ENCODE measurements at regions of chr1 and their contacts with region 1.

Region 1: DNA sequence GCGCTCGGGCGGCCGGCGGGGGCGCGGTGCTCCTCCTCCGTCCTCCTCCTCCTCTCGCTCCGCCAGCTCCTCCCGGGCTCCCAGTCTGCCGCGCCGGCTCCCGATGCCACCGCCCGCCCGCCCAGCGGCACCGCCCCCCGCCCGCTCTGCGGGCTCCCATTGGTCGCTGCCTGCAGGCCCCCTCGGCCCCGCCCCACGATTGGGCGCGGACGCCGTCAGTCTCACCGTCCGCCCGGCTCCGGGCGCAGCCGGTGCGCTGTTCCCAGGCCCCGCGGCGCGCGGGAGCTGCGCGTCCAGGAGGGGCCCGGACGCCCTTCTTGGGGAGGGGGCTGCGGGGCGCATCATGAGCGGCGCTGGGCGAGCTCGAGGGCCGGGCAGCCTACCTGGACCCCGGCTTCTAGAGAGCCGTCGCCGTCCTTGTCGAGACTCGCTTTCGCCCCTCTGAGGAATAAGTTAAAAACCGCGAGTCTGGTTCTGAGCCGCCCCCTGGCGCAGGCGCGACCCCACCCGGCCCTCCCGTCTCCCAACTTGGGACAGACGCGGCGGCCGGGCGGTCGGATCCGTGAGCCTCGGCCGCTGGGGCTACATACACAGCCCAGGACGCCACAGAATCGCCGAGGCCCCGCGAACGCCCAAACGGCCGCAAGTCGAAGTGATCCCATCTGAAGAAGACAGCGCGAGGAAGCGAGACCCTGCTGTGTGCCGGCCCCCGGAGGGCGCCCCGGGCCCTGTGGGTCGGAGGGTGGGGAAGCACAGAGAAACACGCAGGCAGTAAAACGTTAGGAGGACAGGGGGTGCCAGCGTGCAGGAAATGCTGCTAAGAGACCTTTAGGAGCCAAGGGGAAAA is at the start of gene SIPA1L2:
- DNase-seq: peak; percentile 97
- H3K4me3 ChIP-seq: peak within 1 kb of the TSS; percentile 84 to 94 (median 92)
- H3K27ac ChIP-seq: peak within 1 kb of the TSS; percentile 92 to 98 (median 96)
- H3K4me1 ChIP-seq: peaks cover 0 to 33% (median 13%) of the 10 kb centered on the region in 4 donors
- H3K27me3 ChIP-seq: no peaks in the 10 kb centered on the region
- CTCF ChIP-seq: peak in 3 of 4 experiments; percentile 30 to 56 (median 51)
- EP300 ChIP-seq: no peak
- POLR2A ChIP-seq: peak; percentile 31 to 47
- total RNA-seq, gene SIPA1L2: 22.5 to 42.5 (median 32.1) TPM

Region 2: DNA sequence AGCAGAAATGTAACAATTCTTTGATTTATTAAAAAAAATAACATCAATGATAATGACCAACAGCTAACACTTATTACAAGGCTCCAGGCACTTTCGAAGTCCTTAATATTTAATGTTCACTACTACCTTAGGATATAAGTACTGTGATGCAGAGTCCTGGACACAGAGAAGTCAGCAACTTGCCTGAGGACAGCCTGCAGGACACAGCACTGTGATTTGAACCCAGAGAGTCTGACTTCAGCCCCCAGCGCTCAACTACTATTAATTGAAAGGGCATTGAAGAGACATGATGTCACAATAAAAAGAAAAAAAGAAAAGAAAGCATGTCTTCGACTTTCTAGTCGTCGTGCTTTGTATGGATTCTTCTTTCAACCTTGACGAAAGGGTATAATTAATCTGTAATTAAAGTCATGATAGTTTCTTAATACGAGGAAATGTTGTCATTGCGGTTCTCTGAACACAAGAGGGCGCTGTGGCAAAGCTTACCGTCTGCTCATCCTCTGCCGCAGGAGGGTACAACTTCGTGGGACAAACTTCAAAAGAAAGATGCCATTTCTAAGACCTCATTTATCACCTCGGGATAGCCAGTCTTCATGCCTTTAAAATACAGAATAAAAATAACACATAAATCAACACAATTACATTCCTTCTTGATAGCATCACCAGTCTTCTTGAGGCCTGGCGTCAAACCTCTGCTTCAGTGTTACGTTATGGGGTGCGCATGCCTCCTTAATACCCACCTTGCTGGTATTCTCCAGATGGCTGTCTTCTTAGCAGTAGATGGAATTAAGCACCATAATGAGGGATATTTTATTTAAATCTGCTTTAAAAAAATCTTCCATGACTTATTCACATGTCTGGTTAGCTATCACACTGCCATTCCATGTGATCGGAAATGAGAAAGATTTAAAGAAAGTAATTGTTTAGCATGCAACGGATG is 763.6 kb before region 1 on chr1:
- intact Hi-C with region 1: loop called (anchors 2 kb)
- DNase-seq: no peak
- H3K4me3 ChIP-seq: no peak overlapping the region
- H3K27ac ChIP-seq: peak overlapping the region in 1 of 4 donors; percentile 19
- H3K4me1 ChIP-seq: peaks cover 0 to 34% (median 10%) of the 10 kb centered on the region in 4 donors
- H3K27me3 ChIP-seq: no peaks in the 10 kb centered on the region
- CTCF ChIP-seq: peak; percentile 43 to 86 (median 75)
- EP300 ChIP-seq: no peak
- POLR2A ChIP-seq: no peak

Region 3: GRCh38 chr1:232435729-232436128 is 194.5 kb before region 1 on chr1:
- intact Hi-C with region 1: loop called (anchors 5 kb)
- DNase-seq: peak; percentile 76
- H3K4me3 ChIP-seq: no peak overlapping the region
- H3K27ac ChIP-seq: peak overlapping the region in 3 of 4 donors; percentile 1 to 63 (median 61)
- H3K4me1 ChIP-seq: peaks cover 0 to 32% (median 18%) of the 10 kb centered on the region in 4 donors
- H3K27me3 ChIP-seq: no peaks in the 10 kb centered on the region
- CTCF ChIP-seq: no peak
- EP300 ChIP-seq: no peak
- POLR2A ChIP-seq: no peak

Region 4: DNA sequence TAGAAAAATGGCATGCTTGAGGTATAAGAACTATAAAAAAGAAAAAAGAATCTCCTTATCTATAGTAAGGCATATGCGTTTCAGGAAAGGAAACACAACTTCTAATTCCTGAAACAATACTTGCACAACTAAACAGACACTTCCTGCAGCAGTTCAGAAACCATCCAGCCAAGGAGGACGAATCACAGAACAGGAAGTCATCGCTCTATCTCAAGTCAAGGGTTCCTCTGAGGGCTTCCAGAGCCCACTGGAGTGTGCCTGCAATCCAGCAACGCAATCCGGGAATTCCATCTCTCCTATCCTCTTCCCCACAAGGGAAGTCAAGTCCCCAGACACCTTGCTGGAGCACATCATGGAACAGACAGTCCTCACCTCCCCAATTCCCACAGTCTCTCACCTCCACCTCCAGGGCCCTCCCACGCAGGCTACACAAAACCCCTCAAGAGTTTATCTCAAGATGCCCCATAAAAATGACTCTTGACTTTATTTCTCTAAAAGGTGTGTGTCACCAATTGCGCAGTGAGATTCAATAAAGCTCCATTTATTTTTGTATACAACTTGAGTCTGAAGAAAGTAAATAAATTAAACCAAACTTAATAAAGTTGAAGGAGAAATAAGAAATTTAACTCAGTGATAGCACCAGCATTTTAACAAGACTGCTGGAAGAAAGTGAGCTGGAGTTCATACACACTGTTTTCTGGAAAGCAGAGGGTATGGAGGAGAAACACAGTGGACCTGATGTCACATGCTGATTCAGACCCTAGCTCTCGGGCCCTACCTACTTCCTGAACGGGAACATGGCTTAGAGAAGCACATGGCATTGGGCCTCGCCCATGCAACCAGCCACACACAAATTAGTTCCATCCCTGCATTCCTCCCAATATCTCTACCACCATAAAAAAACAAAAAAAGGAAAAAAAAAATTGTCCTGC is 40.2 kb before region 1 on chr1:
- intact Hi-C with region 1: no loop called
- DNase-seq: no peak
- H3K4me3 ChIP-seq: no peak overlapping the region
- H3K27ac ChIP-seq: peak overlapping the region in 3 of 4 donors; percentile 31 to 53 (median 49)
- H3K4me1 ChIP-seq: peaks cover 0 to 37% (median 24%) of the 10 kb centered on the region in 4 donors
- H3K27me3 ChIP-seq: no peaks in the 10 kb centered on the region
- CTCF ChIP-seq: no peak
- EP300 ChIP-seq: no peak
- POLR2A ChIP-seq: no peak

Region 5: DNA sequence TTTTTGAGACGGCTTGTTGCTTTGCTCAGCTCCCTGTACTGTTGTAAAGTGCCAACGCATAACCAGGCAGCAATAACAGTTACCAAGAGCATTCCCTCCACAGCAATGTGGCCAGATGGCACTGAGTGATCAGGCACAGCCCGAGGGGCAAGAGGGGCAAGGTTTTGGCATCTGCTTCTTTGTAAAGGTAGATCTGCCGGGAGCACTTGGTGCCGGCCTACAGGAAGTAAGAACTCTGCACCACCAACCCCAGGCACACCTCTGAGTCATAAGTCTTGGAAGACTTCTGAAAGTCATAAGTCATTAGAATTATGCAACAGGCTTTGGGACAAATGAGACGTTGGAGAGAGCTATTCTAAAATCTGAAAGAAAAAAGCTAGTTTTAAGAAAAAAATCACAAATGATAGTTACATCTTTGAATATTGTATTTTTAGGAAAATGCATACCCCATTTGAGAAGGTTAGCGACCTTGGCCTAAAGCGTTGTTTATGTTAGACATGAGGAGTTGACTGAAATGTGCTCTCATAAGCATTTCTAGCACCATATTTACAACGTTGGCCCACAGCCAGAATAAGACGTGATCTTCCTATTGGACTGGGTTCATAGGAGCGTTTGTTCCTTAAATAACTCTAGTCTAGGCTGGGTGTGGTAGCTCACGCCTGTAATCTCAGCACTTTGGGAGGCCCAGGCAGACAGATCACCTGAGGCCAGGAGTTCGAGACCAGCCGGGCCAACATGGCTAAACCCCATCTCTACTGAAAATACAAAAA is 137.2 kb after region 1 on chr1:
- intact Hi-C with region 1: loop called (anchors 10 kb)
- DNase-seq: peak; percentile 89
- H3K4me3 ChIP-seq: no peak overlapping the region
- H3K27ac ChIP-seq: peak overlapping the region; percentile 68 to 83 (median 71)
- H3K4me1 ChIP-seq: peaks cover 0 to 42% (median 25%) of the 10 kb centered on the region in 4 donors
- H3K27me3 ChIP-seq: no peaks in the 10 kb centered on the region
- CTCF ChIP-seq: no peak
- EP300 ChIP-seq: peak in 1 of 4 donors; percentile 61
- POLR2A ChIP-seq: no peak

Region 6: DNA sequence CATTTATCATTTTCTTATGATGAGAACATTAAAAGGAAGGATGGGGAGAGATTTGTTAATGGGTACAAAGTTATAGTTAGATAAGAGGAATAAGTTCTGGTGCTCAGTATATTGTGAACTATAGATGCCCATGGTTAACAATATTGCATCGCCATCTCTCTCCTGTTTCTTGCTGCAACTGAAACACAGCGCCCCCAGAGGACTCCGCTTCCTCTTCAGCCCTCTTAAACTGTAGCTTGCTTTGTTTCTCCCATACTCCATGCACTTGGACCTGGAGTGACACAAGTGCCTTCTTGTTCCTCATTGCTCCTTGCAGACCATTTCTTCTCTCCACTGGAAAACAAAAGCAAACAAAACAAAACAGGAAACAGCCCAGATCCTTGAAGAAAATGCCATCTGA is 250.1 kb after region 1 on chr1:
- intact Hi-C with region 1: no loop called
- DNase-seq: no peak
- H3K4me3 ChIP-seq: no peak overlapping the region
- H3K27ac ChIP-seq: no peak overlapping the region
- H3K4me1 ChIP-seq: no peaks in the 10 kb centered on the region
- H3K27me3 ChIP-seq: no peaks in the 10 kb centered on the region
- CTCF ChIP-seq: no peak
- EP300 ChIP-seq: no peak
- POLR2A ChIP-seq: no peak

Region 7: DNA sequence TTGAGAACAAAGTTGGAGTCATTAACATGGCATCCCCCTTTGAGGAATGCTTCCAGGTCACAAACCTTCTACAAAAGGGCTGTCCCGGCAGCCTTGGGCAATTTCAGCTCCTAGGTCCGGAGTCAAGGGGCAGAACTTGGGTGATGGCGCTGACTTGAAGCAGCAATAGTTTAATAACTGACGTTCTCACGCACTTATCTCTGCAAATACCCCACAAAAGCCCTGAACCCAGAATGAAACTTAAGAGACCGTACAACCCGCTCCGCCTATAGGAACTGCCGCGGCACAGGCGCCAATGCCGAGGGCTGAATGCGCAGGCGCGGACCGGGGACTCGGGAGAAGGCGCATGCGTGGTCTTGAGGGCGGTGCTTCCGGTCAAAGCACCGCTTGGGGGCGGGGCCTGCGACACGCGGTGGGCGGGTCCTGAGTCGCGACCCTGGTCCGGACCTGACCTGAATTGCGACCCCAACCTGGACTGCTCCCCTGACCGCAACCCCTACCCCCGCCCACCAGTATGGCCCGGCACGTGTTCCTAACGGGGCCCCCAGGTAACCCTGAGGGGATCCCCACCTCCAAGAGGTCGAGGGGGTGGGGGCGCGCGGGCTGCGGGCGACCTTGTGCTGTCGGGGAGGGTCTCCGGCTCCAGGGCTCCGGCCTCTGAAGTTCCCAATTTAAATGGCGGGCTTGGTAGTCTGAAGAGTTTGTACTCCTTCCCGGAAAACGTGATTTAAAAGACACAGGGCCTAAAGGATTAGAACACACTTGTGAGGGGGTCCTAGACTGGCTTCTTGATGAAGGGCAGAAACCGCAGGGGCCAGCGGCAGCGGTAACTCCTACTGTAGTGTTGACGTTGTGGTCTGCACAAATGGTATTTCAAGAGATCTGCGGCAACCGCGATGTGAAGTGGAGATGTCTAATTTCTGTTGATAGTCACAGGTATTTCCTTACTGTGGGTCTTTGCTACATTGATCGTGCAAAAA is 320.2 kb after region 1 on chr1 and contains the start of gene NTPCR:
- intact Hi-C with region 1: loop called (anchors 2 kb)
- DNase-seq: peak; percentile 95
- H3K4me3 ChIP-seq: peak within 1 kb of the TSS; percentile 75 to 99 (median 94)
- H3K27ac ChIP-seq: peak within 1 kb of the TSS; percentile 79 to 84 (median 82)
- H3K4me1 ChIP-seq: peaks cover 0 to 23% (median 14%) of the 10 kb centered on the region in 4 donors
- H3K27me3 ChIP-seq: no peaks in the 10 kb centered on the region
- CTCF ChIP-seq: peak in 2 of 4 experiments; percentile 11 to 15
- EP300 ChIP-seq: no peak
- POLR2A ChIP-seq: peak in 1 of 2 donors; percentile 41
- total RNA-seq, gene NTPCR: 20.5 to 43.2 (median 27.1) TPM

Region 8: DNA sequence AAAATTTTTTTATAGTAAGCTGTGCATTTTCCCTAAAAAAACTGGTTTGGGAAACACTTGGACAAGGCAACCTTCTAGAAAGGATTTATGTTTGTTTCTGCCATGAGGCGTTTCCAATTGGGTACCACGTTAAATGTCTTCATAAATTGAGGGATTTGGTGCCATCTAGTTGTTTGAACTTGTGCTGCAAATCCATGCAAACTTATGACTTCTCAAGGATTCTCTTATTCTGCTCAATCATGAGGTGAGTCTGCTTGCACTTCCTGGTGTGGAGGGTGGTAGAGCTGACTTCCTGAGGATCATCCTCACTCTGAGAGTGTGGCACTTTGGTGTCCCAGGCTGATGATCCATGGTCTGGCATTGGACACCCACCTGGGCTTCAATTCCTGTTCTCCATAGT is 542.0 kb after region 1 on chr1:
- intact Hi-C with region 1: loop called (anchors 10 kb)
- DNase-seq: no peak
- H3K4me3 ChIP-seq: no peak overlapping the region
- H3K27ac ChIP-seq: no peak overlapping the region
- H3K4me1 ChIP-seq: no peaks in the 10 kb centered on the region
- H3K27me3 ChIP-seq: no peaks in the 10 kb centered on the region
- CTCF ChIP-seq: no peak
- EP300 ChIP-seq: no peak
- POLR2A ChIP-seq: no peak